Endothelial cell of umbilical vein (primary cell): ENCODE measurements at regions of chr9 and their contacts with region 1.

Region 1: DNA sequence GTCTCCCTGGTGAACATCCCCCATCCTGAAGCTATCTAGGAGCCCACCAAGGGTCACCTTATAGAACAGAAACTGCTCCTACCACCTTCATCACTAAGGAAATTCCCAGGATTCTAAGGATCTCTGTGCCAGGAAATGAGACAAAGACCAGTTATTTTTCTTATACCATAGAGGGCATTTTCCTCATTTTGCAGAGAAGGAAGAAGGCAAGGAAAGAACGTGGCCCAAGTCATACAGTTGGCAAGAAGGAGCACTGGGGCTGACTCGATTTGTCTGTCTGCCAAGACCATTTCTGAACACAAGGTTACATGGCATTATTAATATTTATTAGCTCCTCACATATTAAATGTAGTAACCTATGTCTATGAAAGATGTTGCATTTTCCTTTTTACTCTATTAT is 49.6 kb upstream of the TNFSF15 start:
- DNase-seq: peak; percentile 71
- H3K4me3 ChIP-seq: no peak overlapping the region
- H3K27ac ChIP-seq: no peak overlapping the region
- H3K4me1 ChIP-seq: peaks cover 10% of the 10 kb centered on the region
- H3K27me3 ChIP-seq: no peaks in the 10 kb centered on the region
- CTCF ChIP-seq: no peak
- POLR2A ChIP-seq: no peak

Region 2: GRCh38 chr9:114805670-114806525 is 49.6 kb before region 1 on chr9 and contains the start of gene TNFSF15:
- CTCF ChIA-PET with region 1: interaction called, 6 read pairs
- POLR2A ChIA-PET with region 1: no interaction called
- dilution Hi-C with region 1: no loop called
- intact Hi-C with region 1: loop called (anchors 2 kb)
- DNase-seq: peak; percentile 68
- H3K4me3 ChIP-seq: peak within 1 kb of the TSS; percentile 28 to 57 (median 33)
- H3K27ac ChIP-seq: peak within 1 kb of the TSS; percentile 64
- H3K4me1 ChIP-seq: peaks cover 38% of the 10 kb centered on the region
- H3K27me3 ChIP-seq: no peaks in the 10 kb centered on the region
- CTCF ChIP-seq: no peak
- POLR2A ChIP-seq: peak; percentile 54
- total RNA-seq, gene TNFSF15: 13.6 and 14.3 TPM in 2 replicates

Region 3: DNA sequence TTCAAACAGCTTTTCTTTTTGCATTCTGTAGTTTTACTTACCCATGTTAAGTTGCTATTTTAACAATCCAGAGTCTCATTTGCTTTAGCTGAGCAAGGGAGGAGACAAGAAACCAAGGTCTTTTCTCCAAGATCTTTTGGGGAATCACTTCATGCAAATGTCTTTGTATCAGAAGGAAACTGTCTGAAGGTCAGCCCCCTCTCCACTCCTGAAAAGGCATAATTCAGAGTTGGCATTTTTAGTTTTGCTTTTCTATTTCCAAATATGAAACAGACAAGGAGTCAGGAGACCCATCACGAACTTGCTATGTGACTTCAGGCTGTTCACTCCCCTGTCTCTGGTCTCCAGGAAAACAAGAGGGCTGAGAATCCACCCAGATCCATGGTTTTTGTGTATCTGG is 37.3 kb before region 1 on chr9:
- CTCF ChIA-PET with region 1: no interaction called
- POLR2A ChIA-PET with region 1: no interaction called
- dilution Hi-C with region 1: no loop called
- intact Hi-C with region 1: no loop called
- DNase-seq: no peak
- H3K4me3 ChIP-seq: no peak overlapping the region
- H3K27ac ChIP-seq: no peak overlapping the region
- H3K4me1 ChIP-seq: no peaks in the 10 kb centered on the region
- H3K27me3 ChIP-seq: no peaks in the 10 kb centered on the region
- CTCF ChIP-seq: no peak
- POLR2A ChIP-seq: no peak

Region 4: GRCh38 chr9:114844766-114845165 is 10.7 kb before region 1 on chr9:
- CTCF ChIA-PET with region 1: no interaction called
- POLR2A ChIA-PET with region 1: no interaction called
- dilution Hi-C with region 1: no loop called
- intact Hi-C with region 1: no loop called
- DNase-seq: no peak
- H3K4me3 ChIP-seq: no peak overlapping the region
- H3K27ac ChIP-seq: no peak overlapping the region
- H3K4me1 ChIP-seq: no peaks in the 10 kb centered on the region
- H3K27me3 ChIP-seq: no peaks in the 10 kb centered on the region
- CTCF ChIP-seq: no peak
- POLR2A ChIP-seq: no peak